ENCODE measurements at regions of chr18 and their contacts with region 1.

Region 1: DNA sequence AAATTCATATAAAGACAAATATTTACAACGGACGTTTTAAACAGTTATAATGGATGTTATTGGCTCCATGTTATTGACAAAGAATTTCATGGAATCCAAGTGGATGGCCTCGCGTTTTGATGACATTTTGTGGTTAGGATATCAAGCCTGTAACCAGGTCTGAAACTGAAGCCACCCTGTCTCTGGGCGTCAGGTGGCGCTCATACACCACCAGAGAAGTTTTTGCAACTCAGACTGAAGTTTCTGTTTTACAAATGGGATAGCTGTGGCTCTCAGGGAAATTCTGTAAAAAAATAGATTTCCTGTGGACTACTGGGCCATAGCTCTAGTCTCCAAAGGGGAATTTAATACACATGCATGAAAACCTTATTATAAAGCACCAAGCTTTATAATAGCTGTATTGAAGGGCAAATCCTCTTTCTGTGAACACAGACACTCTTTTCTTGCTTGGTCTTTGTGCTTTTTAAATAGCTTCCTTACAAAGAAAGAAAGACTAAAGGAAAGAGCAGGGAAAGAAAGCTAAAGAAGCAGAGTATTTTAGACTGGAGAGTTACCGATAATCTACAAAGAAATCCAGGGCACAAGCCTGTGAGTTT is 86.7 kb downstream of the C18orf54 start:
- DNase-seq: peak; percentile 41
- ATAC-seq: 0 out of 2 replicates have a peak, but pooled peaks have one; percentile 62
- H3K4me3 ChIP-seq: no peak overlapping the region
- H3K27ac ChIP-seq: no peak overlapping the region
- H3K4me1 ChIP-seq: no peaks in the 10 kb centered on the region
- H3K27me3 ChIP-seq: no peaks in the 10 kb centered on the region
- CTCF ChIP-seq: peak; percentile 70

Region 2: GRCh38 chr18:54515149-54515548 is 70.7 kb after region 1 on chr18:
- CTCF ChIA-PET with region 1: no interaction called
- POLR2A ChIA-PET with region 1: interaction called, 16 read pairs
- in situ Hi-C with region 1: no loop called
- intact Hi-C with region 1: no loop called
- DNase-seq: no peak
- ATAC-seq: no peak
- H3K4me3 ChIP-seq: no peak overlapping the region
- H3K27ac ChIP-seq: no peak overlapping the region
- H3K4me1 ChIP-seq: no peaks in the 10 kb centered on the region
- H3K27me3 ChIP-seq: no peaks in the 10 kb centered on the region
- CTCF ChIP-seq: no peak

Region 3: GRCh38 chr18:54647176-54647575 is 202.8 kb after region 1 on chr18:
- CTCF ChIA-PET with region 1: interaction called, 4 read pairs
- POLR2A ChIA-PET with region 1: no interaction called
- in situ Hi-C with region 1: no loop called
- intact Hi-C with region 1: loop called (anchors 2 kb)
- DNase-seq: no peak
- ATAC-seq: no peak
- H3K4me3 ChIP-seq: no peak overlapping the region
- H3K27ac ChIP-seq: no peak overlapping the region
- H3K4me1 ChIP-seq: no peaks in the 10 kb centered on the region
- H3K27me3 ChIP-seq: no peaks in the 10 kb centered on the region
- CTCF ChIP-seq: peak; percentile 30; the same call in 1 of the 2 replicates

Region 4: GRCh38 chr18:54671291-54671881 is 227.0 kb after region 1 on chr18:
- CTCF ChIA-PET with region 1: no interaction called
- POLR2A ChIA-PET with region 1: no interaction called
- in situ Hi-C with region 1: no loop called
- intact Hi-C with region 1: loop called (anchors 2 kb)
- DNase-seq: no peak
- ATAC-seq: no peak
- H3K4me3 ChIP-seq: no peak overlapping the region
- H3K27ac ChIP-seq: no peak overlapping the region
- H3K4me1 ChIP-seq: no peaks in the 10 kb centered on the region
- H3K27me3 ChIP-seq: no peaks in the 10 kb centered on the region
- CTCF ChIP-seq: peak; percentile 27; the same call in 1 of the 2 replicates

Region 5: DNA sequence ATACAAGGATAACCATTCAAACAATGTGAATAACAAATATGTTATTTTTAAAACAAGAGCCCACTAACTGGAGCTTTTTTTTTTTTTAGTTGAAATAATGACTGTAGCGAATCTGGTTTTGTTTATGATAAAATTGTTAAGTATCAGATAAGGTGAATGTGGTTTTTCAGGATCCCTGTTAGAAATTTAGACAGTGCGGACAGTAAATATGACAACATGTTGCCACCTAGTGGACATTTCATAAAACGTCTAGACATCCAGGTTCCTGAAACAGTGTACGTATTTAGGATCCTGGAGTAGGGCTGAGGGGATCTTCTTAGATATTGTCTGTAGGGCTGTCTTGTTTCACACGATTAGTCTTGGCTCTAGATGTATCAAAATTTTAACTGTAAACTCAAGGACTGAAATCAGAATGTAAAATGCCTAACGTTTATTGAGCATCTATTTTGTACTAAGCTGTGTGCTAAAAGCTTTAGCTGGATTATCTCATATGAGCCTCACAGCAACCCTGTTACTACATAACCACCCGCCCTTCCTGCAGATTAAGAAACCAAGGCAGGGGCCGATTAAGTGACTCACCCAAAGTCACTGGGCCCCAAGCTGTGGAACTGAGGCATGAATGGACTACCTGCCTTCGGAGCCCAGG is 538.7 kb after region 1 on chr18:
- CTCF ChIA-PET with region 1: no interaction called
- POLR2A ChIA-PET with region 1: no interaction called
- in situ Hi-C with region 1: no loop called
- intact Hi-C with region 1: loop called (anchors 10 kb)
- DNase-seq: peak; percentile 35
- ATAC-seq: peak; percentile 87
- H3K4me3 ChIP-seq: no peak overlapping the region
- H3K27ac ChIP-seq: no peak overlapping the region
- H3K4me1 ChIP-seq: no peaks in the 10 kb centered on the region
- H3K27me3 ChIP-seq: no peaks in the 10 kb centered on the region
- CTCF ChIP-seq: peak; percentile 31; the same call in 1 of the 2 replicates

Region 6: DNA sequence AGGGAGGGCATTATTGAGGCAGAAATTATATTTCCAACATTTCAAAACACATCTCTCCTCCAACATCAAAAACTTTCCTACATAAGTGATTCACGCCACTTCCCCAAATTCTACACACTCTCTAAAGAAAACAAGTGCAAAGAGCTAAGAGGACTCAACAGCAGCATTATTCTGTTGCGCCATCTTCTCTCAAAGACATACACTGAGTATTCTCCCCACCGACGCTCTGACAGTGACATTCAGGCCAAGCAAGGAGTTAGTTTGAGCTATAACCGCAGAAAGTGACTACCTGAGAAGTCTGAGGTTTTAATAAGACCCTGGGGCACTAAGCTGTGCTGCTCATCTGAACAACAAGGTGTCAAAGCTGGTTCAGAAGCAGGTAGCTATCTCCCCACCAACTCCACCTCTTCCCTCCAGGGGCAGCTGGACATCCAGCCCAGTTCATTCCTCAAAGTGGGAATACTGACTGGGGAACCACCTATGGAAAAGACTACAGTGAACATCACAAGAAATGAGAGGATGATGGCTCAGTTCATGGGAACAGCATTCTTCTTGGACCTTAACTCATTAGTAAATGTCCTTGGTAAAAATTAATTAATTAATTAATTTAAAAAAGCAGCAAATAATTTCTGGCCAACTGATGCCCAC is 824.3 kb after region 1 on chr18:
- CTCF ChIA-PET with region 1: no interaction called
- POLR2A ChIA-PET with region 1: interaction called, 15 read pairs
- in situ Hi-C with region 1: no loop called
- intact Hi-C with region 1: no loop called
- DNase-seq: no peak
- ATAC-seq: no peak
- H3K4me3 ChIP-seq: no peak overlapping the region
- H3K27ac ChIP-seq: no peak overlapping the region
- H3K4me1 ChIP-seq: no peaks in the 10 kb centered on the region
- H3K27me3 ChIP-seq: no peaks in the 10 kb centered on the region
- CTCF ChIP-seq: no peak